ENCODE measurements at regions of chrX and their contacts with region 1.

Region 1: GRCh38 chrX:107654872-107655761 is 26.8 kb downstream of the PRPS1 start:
- DNase-seq: peak; percentile 84
- H3K4me3 Mint-ChIP-seq: peak overlapping the region; percentile 45
- H3K27ac Mint-ChIP-seq: peak overlapping the region; percentile 89
- H3K4me1 Mint-ChIP-seq: peaks cover 15% of the 10 kb centered on the region
- H3K27me3 Mint-ChIP-seq: peaks cover 44% of the 10 kb centered on the region
- CTCF ChIP-seq: peak; percentile 66

Region 2: DNA sequence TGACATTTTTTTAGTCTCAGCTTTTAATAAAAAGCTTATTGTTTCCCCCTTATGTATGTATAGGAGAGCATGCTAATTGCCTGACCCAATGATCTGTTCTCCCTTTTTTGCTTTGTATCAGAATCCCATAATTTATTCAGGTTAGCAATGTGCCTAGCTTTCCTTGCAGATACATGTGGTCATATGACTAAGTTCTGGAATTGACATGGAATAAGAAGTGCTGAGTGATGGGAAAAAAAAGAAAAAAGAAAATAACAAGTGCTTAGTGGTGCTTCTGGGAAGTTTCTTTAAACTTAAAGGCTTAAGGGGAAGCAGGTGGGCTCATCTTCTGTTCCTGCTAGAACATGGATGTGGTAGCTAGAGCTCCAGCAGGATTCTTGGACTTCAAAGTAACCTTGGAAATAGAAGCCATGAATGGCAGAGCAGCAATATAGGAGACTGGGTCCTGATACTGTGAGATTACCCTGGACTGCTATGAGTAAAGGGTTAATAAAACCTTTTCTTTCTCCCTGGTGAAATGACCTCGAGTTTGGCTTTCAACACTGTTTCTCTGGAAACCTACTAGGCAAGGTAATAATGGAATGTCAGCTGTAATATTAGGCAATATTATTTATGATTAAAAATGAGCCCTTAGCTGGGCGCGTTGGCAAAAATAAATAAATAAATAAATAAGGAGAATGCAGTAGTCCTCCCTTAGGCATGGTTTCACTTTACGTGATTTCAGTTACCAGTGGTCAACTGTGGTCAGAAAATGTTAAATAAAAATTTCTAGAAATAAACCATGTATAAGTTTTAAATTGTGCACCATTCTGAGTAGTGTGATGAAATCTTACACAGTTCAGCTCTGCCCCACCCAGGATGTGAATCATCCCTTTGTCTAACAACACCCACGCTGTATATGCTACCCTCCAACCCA is 519.8 kb before region 1 on chrX:
- CTCF ChIA-PET with region 1: no interaction called
- POLR2A ChIA-PET with region 1: no interaction called
- intact Hi-C with region 1: no loop called
- DNase-seq: peak; percentile 79
- H3K4me3 Mint-ChIP-seq: peak overlapping the region; percentile 56
- H3K27ac Mint-ChIP-seq: peak overlapping the region; percentile 96
- H3K4me1 Mint-ChIP-seq: peaks cover 15% of the 10 kb centered on the region
- H3K27me3 Mint-ChIP-seq: peaks cover 55% of the 10 kb centered on the region
- CTCF ChIP-seq: no peak

Region 3: DNA sequence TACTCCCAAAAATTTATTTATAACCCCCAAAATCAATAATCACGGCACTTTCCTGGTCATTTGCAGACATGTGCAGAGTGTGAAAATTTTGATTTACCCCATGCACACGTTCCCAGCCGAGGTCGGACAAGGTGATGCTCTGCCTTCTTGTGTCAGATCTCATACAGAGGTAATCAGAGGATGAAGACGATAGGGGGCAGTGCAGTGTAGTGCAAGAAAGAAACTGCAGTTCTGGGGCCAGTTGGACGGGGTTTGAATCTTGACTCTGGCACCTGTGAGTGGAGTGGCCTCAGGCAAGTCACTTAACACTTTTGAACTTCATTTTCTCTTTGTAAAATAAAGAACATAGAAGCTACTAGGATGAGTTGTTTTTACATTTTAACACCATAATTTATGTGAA is 117.3 kb before region 1 on chrX:
- CTCF ChIA-PET with region 1: interaction called, 7 read pairs
- POLR2A ChIA-PET with region 1: interaction called, 3 read pairs
- intact Hi-C with region 1: loop called (anchors 2 kb)
- DNase-seq: peak; percentile 64
- H3K4me3 Mint-ChIP-seq: no peak overlapping the region
- H3K27ac Mint-ChIP-seq: no peak overlapping the region
- H3K4me1 Mint-ChIP-seq: no peaks in the 10 kb centered on the region
- H3K27me3 Mint-ChIP-seq: peaks cover 65% of the 10 kb centered on the region
- CTCF ChIP-seq: peak; percentile 50

Region 4: GRCh38 chrX:107667426-107667825 is 12.3 kb after region 1 on chrX:
- CTCF ChIA-PET with region 1: interaction called, 74 read pairs
- POLR2A ChIA-PET with region 1: interaction called, 47 read pairs
- intact Hi-C with region 1: loop called (anchors 2 kb)
- DNase-seq: no peak
- H3K4me3 Mint-ChIP-seq: no peak overlapping the region
- H3K27ac Mint-ChIP-seq: no peak overlapping the region
- H3K4me1 Mint-ChIP-seq: peaks cover 5% of the 10 kb centered on the region
- H3K27me3 Mint-ChIP-seq: peaks cover 48% of the 10 kb centered on the region
- CTCF ChIP-seq: no peak

Region 5: DNA sequence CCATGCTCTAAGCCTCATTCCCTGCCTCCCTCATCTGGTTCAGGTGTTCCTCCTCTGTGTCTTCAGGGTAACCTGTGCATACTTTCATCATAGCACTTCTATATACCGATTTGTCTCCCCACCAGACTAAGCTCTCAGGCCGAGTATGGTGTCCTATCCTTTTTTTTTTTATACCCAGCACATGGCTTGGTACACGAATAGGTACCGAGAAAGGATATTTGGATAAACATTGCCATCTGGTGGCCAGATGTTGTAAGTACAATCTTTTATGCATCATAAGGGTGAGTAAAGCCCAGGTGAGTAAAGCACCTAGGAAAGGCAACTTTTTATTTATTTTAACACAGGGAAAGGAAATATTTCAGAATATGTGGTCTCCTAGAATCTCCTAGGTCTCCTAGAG is 238.9 kb after region 1 on chrX:
- CTCF ChIA-PET with region 1: interaction called, 3 read pairs
- POLR2A ChIA-PET with region 1: interaction called, 3 read pairs
- intact Hi-C with region 1: loop called (anchors 5 kb)
- DNase-seq: peak; percentile 71
- H3K4me3 Mint-ChIP-seq: no peak overlapping the region
- H3K27ac Mint-ChIP-seq: no peak overlapping the region
- H3K4me1 Mint-ChIP-seq: no peaks in the 10 kb centered on the region
- H3K27me3 Mint-ChIP-seq: peaks cover 59% of the 10 kb centered on the region
- CTCF ChIP-seq: peak; percentile 46